ENCODE measurements at regions of chr13 and their contacts with region 1.

Region 1: DNA sequence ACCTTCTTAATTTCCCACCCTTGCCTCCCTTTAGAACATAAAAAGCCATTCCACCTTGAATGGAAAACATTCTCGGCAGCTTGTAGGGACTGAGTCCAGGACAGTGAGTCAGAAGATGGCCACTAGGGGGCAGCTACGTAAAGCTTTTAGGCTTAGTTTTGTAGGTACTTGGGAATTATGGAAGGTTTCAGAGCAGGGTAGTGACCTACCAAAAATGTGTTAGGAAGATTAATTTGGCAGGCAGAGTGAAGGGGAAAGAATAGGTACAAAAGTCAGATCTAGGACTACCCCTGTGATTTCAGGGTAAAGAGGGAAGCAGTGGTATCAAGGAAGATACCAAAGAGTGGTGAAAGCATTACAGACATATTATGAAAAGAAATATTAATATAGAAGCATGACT is 198.4 kb downstream of the NDFIP2 start:
- DNase-seq: peak; percentile 12
- H3K4me3 ChIP-seq: no peak overlapping the region
- H3K27ac ChIP-seq: peak overlapping the region in 1 of 2 experiments; percentile 92; a peak in 2 of 4 replicates
- H3K4me1 ChIP-seq: peaks cover 14 to 30% of the 10 kb centered on the region in 2 experiments; a peak in 3 of 4 replicates
- H3K27me3 ChIP-seq: no peaks in the 10 kb centered on the region
- CTCF ChIP-seq: peak; percentile 80
- EP300 ChIP-seq: peak in 1 of 2 experiments; percentile 47; a peak in 1 of 4 replicates
- RAD21 ChIP-seq: peak; percentile 88

Region 2: DNA sequence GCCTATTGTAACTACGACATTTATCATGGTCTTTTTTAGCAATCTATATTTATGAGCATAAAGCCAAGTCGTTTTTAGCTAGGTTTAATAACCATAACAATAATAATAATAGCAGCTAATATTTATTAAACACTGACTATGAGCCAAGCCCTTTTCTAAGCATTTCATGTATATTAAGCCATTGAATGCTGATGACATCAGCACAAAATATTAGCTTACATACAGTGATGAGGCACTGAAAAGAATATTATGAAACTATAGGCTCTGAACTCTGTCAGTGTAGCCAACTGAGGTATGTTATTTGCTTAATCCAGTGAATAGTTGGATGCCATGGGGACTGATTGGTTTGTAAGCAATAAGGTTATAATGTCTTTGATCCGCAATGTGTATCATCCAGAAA is 36.9 kb after region 1 on chr13:
- CTCF ChIA-PET with region 1: no interaction called
- POLR2A ChIA-PET with region 1: no interaction called
- DNase-seq: no peak
- H3K4me3 ChIP-seq: no peak overlapping the region
- H3K27ac ChIP-seq: no peak overlapping the region
- H3K4me1 ChIP-seq: no peaks in the 10 kb centered on the region; a peak in 1 of 4 replicates
- H3K27me3 ChIP-seq: no peaks in the 10 kb centered on the region
- CTCF ChIP-seq: no peak
- EP300 ChIP-seq: no peak
- RAD21 ChIP-seq: no peak

Region 3: GRCh38 chr13:80334597-80335260 is 655.4 kb after region 1 on chr13:
- CTCF ChIA-PET with region 1: interaction called, 10 read pairs
- POLR2A ChIA-PET with region 1: interaction called, 3 read pairs
- DNase-seq: no peak
- H3K4me3 ChIP-seq: peak overlapping the region; percentile 16 to 76; a peak in 3 of 4 replicates
- H3K27ac ChIP-seq: peak overlapping the region; percentile 36 to 100; a peak in 3 of 4 replicates
- H3K4me1 ChIP-seq: peaks cover 8 to 11% of the 10 kb centered on the region in 2 experiments; a peak in 3 of 4 replicates
- H3K27me3 ChIP-seq: no peaks in the 10 kb centered on the region
- CTCF ChIP-seq: peak; percentile 19; the same call in 1 of the 2 replicates
- EP300 ChIP-seq: no peak
- RAD21 ChIP-seq: no peak

Region 4: DNA sequence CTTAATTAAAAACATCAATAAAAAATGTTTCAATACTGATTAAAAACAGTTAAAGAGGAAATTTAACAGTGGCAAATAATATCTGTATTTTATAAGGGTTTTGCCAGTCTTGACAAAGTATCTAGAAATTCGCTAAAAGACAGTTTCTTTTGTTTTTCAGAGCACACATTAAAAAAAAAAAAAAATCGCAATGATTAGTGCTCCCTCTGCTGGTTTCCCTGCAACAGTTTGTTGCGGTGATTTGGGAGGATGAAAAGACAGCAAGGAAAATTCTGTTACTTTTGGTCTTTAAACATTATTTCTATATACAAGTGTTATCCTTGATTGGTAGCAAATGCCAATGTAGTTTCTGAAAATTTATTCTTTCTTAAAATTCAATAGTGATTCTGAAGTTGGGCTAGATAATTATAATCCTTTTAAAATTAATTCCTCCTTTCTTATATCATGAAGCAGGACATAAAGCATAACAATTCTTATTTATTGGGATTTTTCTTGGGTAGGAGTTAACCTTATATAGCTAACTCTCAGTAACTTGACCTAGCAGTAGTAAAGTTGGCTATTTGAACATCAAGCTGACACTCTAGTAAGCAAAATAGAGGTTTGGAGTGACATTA is 684.7 kb after region 1 on chr13:
- CTCF ChIA-PET with region 1: interaction called, 15 read pairs
- POLR2A ChIA-PET with region 1: no interaction called
- DNase-seq: peak; percentile 56
- H3K4me3 ChIP-seq: no peak overlapping the region
- H3K27ac ChIP-seq: peak overlapping the region in 1 of 2 experiments; percentile 31; a peak in 2 of 4 replicates
- H3K4me1 ChIP-seq: peaks cover 10 to 24% of the 10 kb centered on the region in 2 experiments; a peak in 3 of 4 replicates
- H3K27me3 ChIP-seq: no peaks in the 10 kb centered on the region
- CTCF ChIP-seq: peak; percentile 97
- EP300 ChIP-seq: no peak
- RAD21 ChIP-seq: peak; percentile 80